ENCODE measurements at regions of chr2 and their contacts with region 1.

Region 1: GRCh38 chr2:14583059-14583458 is 49.5 kb upstream of the LRATD1 start:
- DNase-seq: no peak
- ATAC-seq: no peak
- H3K4me3 Mint-ChIP-seq: no peak overlapping the region
- H3K27ac Mint-ChIP-seq: no peak overlapping the region
- H3K4me1 Mint-ChIP-seq: no peaks in the 10 kb centered on the region
- H3K27me3 Mint-ChIP-seq: no peaks in the 10 kb centered on the region

Region 2: GRCh38 chr2:14650066-14650465 is 67.0 kb after region 1 on chr2:
- CTCF ChIA-PET with region 1: no interaction called
- POLR2A ChIA-PET with region 1: no interaction called
- intact Hi-C with region 1: loop called in 1 of 2 experiments (anchors 2 kb)
- DNase-seq: no peak
- ATAC-seq: no peak
- H3K4me3 Mint-ChIP-seq: no peak overlapping the region
- H3K27ac Mint-ChIP-seq: no peak overlapping the region
- H3K4me1 Mint-ChIP-seq: no peaks in the 10 kb centered on the region
- H3K27me3 Mint-ChIP-seq: no peaks in the 10 kb centered on the region

Region 3: DNA sequence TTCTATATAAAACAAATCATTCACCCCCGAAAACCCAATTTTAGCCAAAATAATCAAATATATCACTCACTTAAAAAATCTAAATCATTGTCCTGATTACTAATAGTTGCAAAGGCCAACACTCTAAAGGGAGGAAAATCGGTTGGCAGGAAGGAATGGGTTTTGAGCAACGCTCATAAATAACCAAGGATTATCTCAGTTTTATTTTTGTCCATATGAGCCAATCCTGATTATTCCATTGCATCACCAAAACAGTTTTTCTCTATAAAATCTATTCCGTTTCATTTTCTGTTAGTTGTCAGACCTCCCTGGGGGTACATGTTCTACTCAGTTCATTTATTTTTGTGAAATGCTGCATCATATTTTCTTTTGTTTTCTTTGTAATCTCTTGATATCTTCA is 223.6 kb after region 1 on chr2:
- CTCF ChIA-PET with region 1: no interaction called
- POLR2A ChIA-PET with region 1: no interaction called
- intact Hi-C with region 1: no loop called
- DNase-seq: no peak
- ATAC-seq: no peak
- H3K4me3 Mint-ChIP-seq: no peak overlapping the region
- H3K27ac Mint-ChIP-seq: no peak overlapping the region
- H3K4me1 Mint-ChIP-seq: no peaks in the 10 kb centered on the region
- H3K27me3 Mint-ChIP-seq: no peaks in the 10 kb centered on the region